H1 (cell line): ENCODE measurements at regions of chr2 and their contacts with region 1.

Region 1: GRCh38 chr2:10546975-10547391 is 98.9 kb upstream of the ODC1 start:
- DNase-seq: no peak
- H3K4me3 ChIP-seq: no peak overlapping the region
- H3K27ac ChIP-seq: no peak overlapping the region
- H3K4me1 ChIP-seq: peaks cover 6 to 12% (median 7%) of the 10 kb centered on the region in 4 experiments; a peak in 6 of 7 replicates
- H3K27me3 ChIP-seq: peaks cover 0 to 3% (median 0%) of the 10 kb centered on the region in 4 experiments; a peak in 3 of 7 replicates
- CTCF ChIP-seq: no peak
- EP300 ChIP-seq: no peak
- POLR2A ChIP-seq: no peak
- RAD21 ChIP-seq: no peak

Region 2: GRCh38 chr2:10382354-10383061 is 164.5 kb before region 1 on chr2:
- CTCF ChIA-PET with region 1: no interaction called
- POLR2A ChIA-PET with region 1: no interaction called
- DNase-seq: no peak
- H3K4me3 ChIP-seq: no peak overlapping the region
- H3K27ac ChIP-seq: no peak overlapping the region
- H3K4me1 ChIP-seq: peaks cover 3 to 17% (median 13%) of the 10 kb centered on the region in 4 experiments
- H3K27me3 ChIP-seq: no peaks in the 10 kb centered on the region
- CTCF ChIP-seq: no peak
- EP300 ChIP-seq: no peak
- POLR2A ChIP-seq: no peak
- RAD21 ChIP-seq: no peak

Region 3: GRCh38 chr2:10557506-10558265 is 10.7 kb after region 1 on chr2:
- CTCF ChIA-PET with region 1: interaction called, 11 read pairs
- POLR2A ChIA-PET with region 1: interaction called, 3 read pairs
- DNase-seq: no peak
- H3K4me3 ChIP-seq: no peak overlapping the region
- H3K27ac ChIP-seq: no peak overlapping the region
- H3K4me1 ChIP-seq: no peaks in the 10 kb centered on the region
- H3K27me3 ChIP-seq: no peaks in the 10 kb centered on the region
- CTCF ChIP-seq: peak in 2 of 3 experiments; percentile 6 to 9; a peak in 2 of 4 replicates
- EP300 ChIP-seq: no peak
- POLR2A ChIP-seq: no peak
- RAD21 ChIP-seq: peak; percentile 7 to 30; a peak in 1 of 4 replicates

Region 4: DNA sequence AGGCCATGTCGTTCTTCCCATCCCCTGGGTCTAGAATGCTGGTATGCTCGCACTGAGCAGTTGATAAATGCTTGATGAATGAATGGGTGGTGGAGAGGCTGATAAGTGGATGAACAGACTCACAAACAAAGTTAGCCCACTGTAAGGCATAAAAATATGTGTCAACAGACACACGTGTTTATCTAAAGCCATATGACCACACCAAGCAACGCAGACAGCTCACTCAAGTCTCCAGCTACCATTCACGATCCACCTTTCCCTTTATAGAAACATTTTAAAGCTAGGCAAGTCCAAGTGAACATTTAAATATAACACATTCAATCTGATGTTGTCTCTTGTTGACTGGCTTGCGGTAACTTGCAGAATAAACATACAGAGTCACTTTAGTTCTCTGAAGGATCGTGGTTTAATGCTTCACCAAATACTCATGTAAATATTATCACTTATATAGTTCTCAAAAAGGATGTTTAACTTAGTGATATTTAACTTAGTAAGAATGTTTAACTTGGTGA is 37.3 kb after region 1 on chr2:
- CTCF ChIA-PET with region 1: no interaction called
- POLR2A ChIA-PET with region 1: no interaction called
- DNase-seq: no peak
- H3K4me3 ChIP-seq: no peak overlapping the region
- H3K27ac ChIP-seq: no peak overlapping the region
- H3K4me1 ChIP-seq: peaks cover 0 to 6% (median 3%) of the 10 kb centered on the region in 4 experiments; a peak in 5 of 7 replicates
- H3K27me3 ChIP-seq: no peaks in the 10 kb centered on the region
- CTCF ChIP-seq: no peak
- EP300 ChIP-seq: no peak
- POLR2A ChIP-seq: no peak
- RAD21 ChIP-seq: no peak